Activated CD8-positive, alpha-beta T cell treated with anti-CD3 and anti-CD28 coated beads for 36 hours (primary cell): ENCODE measurements at regions of chr3 and their contacts with region 1.

Region 1: DNA sequence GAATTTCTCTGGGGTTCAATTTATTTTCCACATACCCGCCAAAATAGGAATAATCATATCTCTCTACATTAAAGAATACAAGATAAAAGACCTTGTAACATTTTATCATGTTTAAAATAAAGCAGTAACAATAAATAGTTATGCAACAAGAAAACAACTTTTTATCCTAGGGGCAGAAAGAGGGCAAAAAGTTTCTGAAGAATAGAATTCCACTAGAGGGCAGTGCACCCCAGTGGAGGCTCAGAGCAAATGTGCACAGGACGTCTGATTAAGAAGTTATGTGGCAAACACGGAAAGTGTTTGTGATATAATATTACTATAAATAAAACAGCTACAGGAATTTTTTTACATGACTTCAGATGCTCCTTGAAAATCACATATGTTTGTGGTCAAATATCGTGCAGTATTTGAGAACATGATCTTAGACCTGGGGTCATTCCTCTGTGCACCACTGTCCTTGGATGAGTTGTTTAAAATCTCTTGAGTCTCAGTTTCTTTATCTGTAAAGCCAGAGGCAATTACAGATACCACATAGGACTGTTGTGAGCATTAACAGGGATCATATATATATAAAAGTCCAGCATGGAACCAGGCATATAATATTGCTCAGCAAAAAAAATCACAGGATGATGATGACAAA is 13.2 kb upstream of the PIK3R4 start:
- DNase-seq: peak; percentile 75
- ATAC-seq: peak; percentile 78
- H3K4me3 Mint-ChIP-seq: no peak overlapping the region
- H3K27ac Mint-ChIP-seq: no peak overlapping the region
- H3K4me1 Mint-ChIP-seq: no peaks in the 10 kb centered on the region
- H3K27me3 Mint-ChIP-seq: peaks cover 2% of the 10 kb centered on the region
- CTCF ChIP-seq: peak; percentile 84

Region 2: GRCh38 chr3:130746246-130747039 is 13.4 kb before region 1 on chr3 and contains the start of gene PIK3R4:
- CTCF ChIA-PET with region 1: interaction called, 10 read pairs
- POLR2A ChIA-PET with region 1: interaction called, 3 read pairs
- intact Hi-C with region 1: no loop called
- DNase-seq: peak; percentile 98
- ATAC-seq: peak; percentile 84
- H3K4me3 Mint-ChIP-seq: peak within 1 kb of the TSS; percentile 85
- H3K27ac Mint-ChIP-seq: peak within 1 kb of the TSS; percentile 95
- H3K4me1 Mint-ChIP-seq: peaks cover 45% of the 10 kb centered on the region
- H3K27me3 Mint-ChIP-seq: no peaks in the 10 kb centered on the region
- CTCF ChIP-seq: no peak
- total RNA-seq, gene PIK3R4: 27.4 to 28.4 TPM

Region 3: GRCh38 chr3:130773366-130773765 is 13.5 kb after region 1 on chr3:
- CTCF ChIA-PET with region 1: interaction called, 15 read pairs
- POLR2A ChIA-PET with region 1: no interaction called
- intact Hi-C with region 1: no loop called
- DNase-seq: no peak
- ATAC-seq: no peak
- H3K4me3 Mint-ChIP-seq: no peak overlapping the region
- H3K27ac Mint-ChIP-seq: no peak overlapping the region
- H3K4me1 Mint-ChIP-seq: no peaks in the 10 kb centered on the region
- H3K27me3 Mint-ChIP-seq: peaks cover 10% of the 10 kb centered on the region
- CTCF ChIP-seq: no peak

Region 4: DNA sequence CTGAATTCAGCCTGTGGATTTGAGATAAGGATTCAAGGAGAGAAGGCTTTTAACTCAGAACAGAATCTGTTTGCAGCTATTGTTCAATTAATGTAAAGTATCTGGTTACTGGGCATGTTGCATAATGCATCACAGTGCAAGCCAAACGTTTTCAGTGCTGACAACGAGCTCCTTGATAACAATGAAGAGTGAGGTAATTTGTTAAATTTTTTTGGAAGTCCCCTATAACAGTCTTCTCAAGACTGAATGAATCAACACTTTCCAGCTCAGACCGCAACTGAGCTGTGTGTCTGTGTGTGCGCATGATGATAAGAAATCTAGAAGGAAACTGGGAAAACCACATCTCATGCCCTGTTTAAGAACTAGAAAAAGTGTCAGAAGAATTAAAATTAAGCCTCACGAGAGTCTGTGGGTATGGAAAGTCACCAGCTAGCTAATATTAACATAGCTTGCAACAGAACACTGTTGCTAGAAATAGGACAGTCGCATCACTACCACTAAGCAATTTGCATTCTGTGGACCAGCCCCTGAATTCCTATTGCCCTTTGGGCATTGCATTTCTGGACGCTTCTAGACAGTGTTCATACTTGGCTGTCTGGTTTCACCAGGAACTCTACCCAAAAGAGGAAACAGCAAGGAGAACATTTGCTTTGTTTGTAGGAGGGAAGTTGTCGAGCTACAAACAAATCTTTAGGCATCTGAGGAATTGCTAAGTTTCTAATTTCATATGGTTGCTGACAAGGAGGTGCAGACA is 90.4 kb after region 1 on chr3:
- CTCF ChIA-PET with region 1: interaction called, 19 read pairs
- POLR2A ChIA-PET with region 1: no interaction called
- intact Hi-C with region 1: no loop called
- DNase-seq: peak; percentile 80
- ATAC-seq: peak; percentile 96
- H3K4me3 Mint-ChIP-seq: peak overlapping the region; percentile 57
- H3K27ac Mint-ChIP-seq: peak overlapping the region; percentile 60
- H3K4me1 Mint-ChIP-seq: peaks cover 40% of the 10 kb centered on the region
- H3K27me3 Mint-ChIP-seq: peaks cover 25% of the 10 kb centered on the region
- CTCF ChIP-seq: no peak

Region 5: DNA sequence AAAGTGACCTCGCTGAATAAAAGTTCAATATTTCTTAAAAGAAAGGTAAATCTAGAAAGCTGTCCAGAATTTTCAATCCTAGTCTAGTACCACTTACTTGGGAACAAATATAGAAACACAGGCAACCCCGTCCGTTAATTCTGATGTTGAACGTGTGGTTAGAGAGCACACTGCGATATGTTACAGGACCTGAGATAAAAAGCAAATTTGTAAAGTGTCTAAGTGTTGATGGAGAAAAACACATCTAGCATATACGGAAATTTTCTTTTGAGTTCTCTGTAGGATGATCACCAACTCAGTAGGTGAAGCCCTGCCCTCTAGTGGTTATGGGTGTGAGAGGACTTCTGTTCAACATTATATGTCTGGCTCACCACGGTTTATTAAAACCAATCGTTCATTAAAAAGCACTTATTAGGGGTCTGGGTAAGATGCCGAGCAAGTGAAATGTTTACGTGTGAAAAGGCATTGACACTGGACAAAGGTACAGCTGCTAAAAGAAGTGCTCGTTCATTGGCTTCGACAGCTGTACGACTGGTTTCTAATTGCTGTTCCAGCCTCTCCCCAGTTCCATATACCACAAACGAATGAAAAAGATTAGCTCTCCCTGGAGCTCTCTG is 133.0 kb after region 1 on chr3:
- CTCF ChIA-PET with region 1: interaction called, 125 read pairs
- POLR2A ChIA-PET with region 1: interaction called, 6 read pairs
- intact Hi-C with region 1: loop called (anchors 1 kb)
- DNase-seq: peak; percentile 84
- ATAC-seq: peak; percentile 57
- H3K4me3 Mint-ChIP-seq: peak overlapping the region; percentile 97
- H3K27ac Mint-ChIP-seq: peak overlapping the region; percentile 98
- H3K4me1 Mint-ChIP-seq: peaks cover 32% of the 10 kb centered on the region
- H3K27me3 Mint-ChIP-seq: no peaks in the 10 kb centered on the region
- CTCF ChIP-seq: peak; percentile 91

Region 6: DNA sequence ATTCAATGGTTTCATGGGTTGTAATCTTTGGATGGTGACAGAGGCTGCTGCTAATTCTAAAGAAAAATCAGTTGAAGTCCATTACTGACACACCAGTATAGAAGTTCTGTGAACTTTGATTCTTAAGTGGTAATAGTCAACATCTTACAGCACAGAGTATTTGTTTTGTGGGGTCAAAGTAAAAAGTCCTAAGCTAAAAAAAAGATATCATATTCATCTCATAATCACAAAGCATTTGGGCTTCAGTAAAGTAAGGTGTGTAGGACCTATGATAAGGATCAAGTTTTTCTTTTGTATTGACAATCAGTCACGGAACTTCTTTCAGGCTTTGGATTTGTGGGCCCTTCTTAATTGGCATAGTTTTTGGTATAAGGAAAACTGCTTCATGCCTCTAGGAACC is 265.7 kb after region 1 on chr3:
- CTCF ChIA-PET with region 1: interaction called, 11 read pairs
- POLR2A ChIA-PET with region 1: no interaction called
- intact Hi-C with region 1: no loop called
- DNase-seq: no peak
- ATAC-seq: no peak
- H3K4me3 Mint-ChIP-seq: peak overlapping the region; percentile 78
- H3K27ac Mint-ChIP-seq: peak overlapping the region; percentile 94
- H3K4me1 Mint-ChIP-seq: peaks cover 52% of the 10 kb centered on the region
- H3K27me3 Mint-ChIP-seq: no peaks in the 10 kb centered on the region
- CTCF ChIP-seq: no peak